ENCODE measurements at regions of chr5 and their contacts with region 1.

Region 1: DNA sequence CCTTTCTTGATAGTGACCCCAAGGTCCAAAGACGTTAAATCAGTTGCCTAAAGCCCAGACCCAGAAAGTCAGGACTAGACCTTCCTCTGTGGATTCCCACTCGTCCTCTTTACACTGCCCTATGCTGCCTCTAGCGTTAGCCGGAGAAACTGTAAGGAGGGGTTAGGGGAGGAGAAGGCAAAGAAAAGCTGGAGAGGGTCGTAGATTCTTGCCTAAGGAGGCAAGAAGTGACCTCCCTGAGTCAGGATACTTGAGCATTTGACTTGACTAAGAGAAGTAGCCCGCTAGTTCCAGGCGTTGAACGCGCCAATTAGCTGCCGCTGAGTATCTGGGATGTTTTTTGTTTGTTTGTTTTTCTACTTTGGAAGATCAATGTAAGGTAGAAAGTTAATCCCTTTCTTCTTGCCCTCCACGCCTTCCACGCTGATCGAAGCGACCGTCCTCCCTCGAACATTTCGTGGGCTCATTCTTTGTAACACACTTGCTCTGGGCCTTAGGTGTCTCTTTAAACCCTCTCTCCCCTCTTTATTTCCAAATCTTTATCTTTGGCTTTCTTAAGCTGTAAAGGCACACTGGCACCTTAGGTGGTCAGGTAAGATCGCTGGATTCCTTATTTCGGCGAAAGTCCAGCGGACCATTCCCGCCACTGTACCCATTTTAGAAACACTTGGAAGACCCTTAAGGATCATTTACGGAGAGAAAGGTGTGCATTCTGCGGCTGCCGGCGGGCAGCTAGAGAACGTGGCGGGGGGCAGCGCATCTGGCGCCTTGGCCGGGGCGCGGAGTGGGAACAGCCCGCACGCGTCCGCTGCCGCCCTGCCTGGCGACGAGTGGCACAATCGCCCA is 5.1 kb upstream of the RGMB start:
- DNase-seq: peak in 3 of 5 donors; percentile 6 to 46 (median 35)
- H3K4me3 ChIP-seq: peak overlapping the region; percentile 73
- H3K4me3 Mint-ChIP-seq: peak overlapping the region; percentile 77 to 99 (median 94)
- H3K27ac ChIP-seq: no peak overlapping the region
- H3K27ac Mint-ChIP-seq: peak overlapping the region in 1 of 8 donors; percentile 9
- H3K4me1 ChIP-seq: peaks cover 36% of the 10 kb centered on the region
- H3K4me1 Mint-ChIP-seq: peaks cover 38 to 49% (median 47%) of the 10 kb centered on the region in 3 donors
- H3K27me3 ChIP-seq: peaks cover 26% of the 10 kb centered on the region
- H3K27me3 Mint-ChIP-seq: peaks cover 40 to 49% of the 10 kb centered on the region in 2 donors

Region 2: DNA sequence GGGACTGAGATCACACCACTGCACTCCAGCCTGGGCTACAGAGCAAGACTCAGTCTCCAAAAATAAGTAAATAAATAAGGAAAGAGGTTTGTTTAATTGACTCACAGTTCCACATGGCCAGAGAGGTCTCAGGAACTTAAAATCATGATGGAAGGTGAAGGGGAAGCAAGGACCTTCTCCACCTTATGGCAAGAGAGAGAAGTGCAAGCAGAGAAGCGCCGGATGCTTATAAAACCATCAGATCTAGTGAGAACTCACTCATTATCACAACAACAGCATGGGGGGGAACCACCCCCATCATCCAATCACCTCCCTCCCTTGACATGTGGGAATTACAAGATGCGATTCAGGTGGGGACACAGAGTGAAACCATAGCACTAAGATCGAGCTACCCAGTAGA is 17.7 kb before region 1 on chr5:
- CTCF ChIA-PET with region 1: interaction called, 23 read pairs
- POLR2A ChIA-PET with region 1: no interaction called
- DNase-seq: no peak
- H3K4me3 ChIP-seq: no peak overlapping the region
- H3K4me3 Mint-ChIP-seq: no peak overlapping the region
- H3K27ac ChIP-seq: no peak overlapping the region
- H3K27ac Mint-ChIP-seq: no peak overlapping the region
- H3K4me1 ChIP-seq: no peaks in the 10 kb centered on the region
- H3K4me1 Mint-ChIP-seq: no peaks in the 10 kb centered on the region
- H3K27me3 ChIP-seq: no peaks in the 10 kb centered on the region
- H3K27me3 Mint-ChIP-seq: peaks cover 10 to 33% of the 10 kb centered on the region in 2 donors

Region 3: GRCh38 chr5:98786191-98786853 is 17.9 kb after region 1 on chr5:
- CTCF ChIA-PET with region 1: interaction called, 29 read pairs
- POLR2A ChIA-PET with region 1: no interaction called
- DNase-seq: no peak
- H3K4me3 ChIP-seq: no peak overlapping the region
- H3K4me3 Mint-ChIP-seq: no peak overlapping the region
- H3K27ac ChIP-seq: no peak overlapping the region
- H3K27ac Mint-ChIP-seq: peak overlapping the region in 2 of 8 donors; percentile 23 to 42
- H3K4me1 ChIP-seq: no peaks in the 10 kb centered on the region
- H3K4me1 Mint-ChIP-seq: peaks cover 2 to 29% (median 14%) of the 10 kb centered on the region in 3 donors
- H3K27me3 ChIP-seq: no peaks in the 10 kb centered on the region
- H3K27me3 Mint-ChIP-seq: peaks cover 0 to 6% of the 10 kb centered on the region in 2 donors

Region 4: GRCh38 chr5:98796197-98796972 is 28.0 kb after region 1 on chr5:
- CTCF ChIA-PET with region 1: interaction called, 19 read pairs
- POLR2A ChIA-PET with region 1: no interaction called
- DNase-seq: peak in 2 of 5 donors; percentile 25 to 54
- H3K4me3 ChIP-seq: no peak overlapping the region
- H3K4me3 Mint-ChIP-seq: no peak overlapping the region
- H3K27ac ChIP-seq: no peak overlapping the region
- H3K27ac Mint-ChIP-seq: peak overlapping the region in 1 of 8 donors; percentile 35
- H3K4me1 ChIP-seq: no peaks in the 10 kb centered on the region
- H3K4me1 Mint-ChIP-seq: peaks cover 0 to 5% (median 0%) of the 10 kb centered on the region in 3 donors
- H3K27me3 ChIP-seq: no peaks in the 10 kb centered on the region
- H3K27me3 Mint-ChIP-seq: no peaks in the 10 kb centered on the region